ENCODE measurements at regions of chr9 and their contacts with region 1.

Region 1: DNA sequence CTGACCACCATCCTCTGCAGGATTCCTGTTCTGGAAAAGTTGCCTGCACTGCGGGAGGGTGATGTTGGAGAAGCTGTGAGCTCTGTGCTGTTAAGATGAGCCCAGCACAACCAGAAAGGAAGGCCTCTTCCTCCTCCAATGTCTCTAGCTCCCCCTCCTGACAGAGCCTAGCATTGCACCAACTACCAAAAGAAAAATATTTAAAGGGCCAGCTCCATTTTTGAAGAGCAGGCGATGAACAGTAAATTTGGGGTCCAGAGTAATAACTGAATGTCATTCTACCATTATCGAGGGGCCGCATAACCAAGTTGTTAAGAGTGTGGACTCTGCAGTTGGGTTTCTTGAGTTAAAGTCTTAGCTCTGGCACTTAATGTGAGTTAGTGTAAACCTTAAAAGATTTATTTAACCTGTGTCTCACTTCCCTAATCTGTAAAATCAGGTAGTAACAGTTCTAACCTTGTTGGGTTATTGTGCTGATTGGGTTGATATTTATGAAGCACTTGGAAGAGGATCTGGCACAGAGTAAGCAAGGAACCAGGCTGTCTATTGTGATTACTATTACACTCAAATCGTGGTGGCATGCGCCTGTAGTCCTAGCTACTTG is 3.9 kb downstream of the TEX53 start:
- DNase-seq: peak; percentile 76
- H3K4me3 ChIP-seq: no peak overlapping the region
- H3K27ac ChIP-seq: no peak overlapping the region
- H3K4me1 ChIP-seq: no peaks in the 10 kb centered on the region
- H3K27me3 ChIP-seq: peaks cover 0 to 1% of the 10 kb centered on the region in 2 experiments
- CTCF ChIP-seq: peak; percentile 89 to 93
- POLR2A ChIP-seq: no peak

Region 2: DNA sequence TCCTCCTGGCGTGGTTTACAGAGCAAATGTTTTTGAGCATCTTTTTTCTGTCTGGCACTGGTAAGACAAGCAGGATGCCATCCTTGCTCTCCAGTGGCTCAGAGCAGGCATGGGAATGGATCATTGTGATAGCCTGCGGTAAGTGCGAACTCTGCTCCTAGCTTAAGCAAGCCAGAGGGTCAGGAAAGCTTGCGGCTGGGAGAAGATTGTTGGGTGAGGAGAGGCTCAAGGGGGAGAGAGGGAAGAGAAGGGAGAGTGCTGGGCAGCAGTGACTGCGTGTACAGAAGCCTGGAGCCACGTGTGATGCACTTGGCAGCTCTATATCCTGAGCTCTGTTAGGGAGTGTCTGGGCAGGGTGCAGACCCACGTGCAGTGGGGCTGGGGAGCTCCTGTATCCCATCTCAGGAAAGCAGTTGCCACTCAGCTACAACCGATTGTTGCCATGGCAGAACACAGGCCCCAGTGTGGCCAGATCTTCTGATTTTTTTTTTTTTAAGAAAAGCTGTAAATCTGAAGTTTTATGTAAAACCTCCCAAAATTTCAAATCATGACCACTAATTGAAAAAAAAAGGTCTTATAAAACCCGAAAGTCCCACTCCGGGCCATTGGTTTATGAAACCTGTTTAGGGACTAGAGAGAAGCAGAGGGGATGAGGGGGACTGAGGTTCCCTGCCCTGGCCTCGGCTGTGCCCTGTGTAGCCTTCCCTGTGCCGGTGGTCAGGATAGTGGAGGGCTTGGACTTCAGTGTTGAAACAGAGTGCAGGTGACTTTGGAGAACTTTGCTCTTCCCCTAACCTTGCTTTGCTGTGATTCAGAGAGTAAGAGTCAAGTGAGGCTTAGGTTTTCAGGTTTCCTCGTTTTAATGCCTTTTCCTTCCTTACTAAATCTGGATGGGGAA is 710.3 kb before region 1 on chr9:
- CTCF ChIA-PET with region 1: no interaction called
- POLR2A ChIA-PET with region 1: no interaction called
- dilution Hi-C with region 1: no loop called
- intact Hi-C with region 1: no loop called
- DNase-seq: no peak
- H3K4me3 ChIP-seq: no peak overlapping the region
- H3K27ac ChIP-seq: no peak overlapping the region
- H3K4me1 ChIP-seq: no peaks in the 10 kb centered on the region
- H3K27me3 ChIP-seq: no peaks in the 10 kb centered on the region
- CTCF ChIP-seq: no peak
- POLR2A ChIP-seq: no peak

Region 3: GRCh38 chr9:114413861-114414301 is 239.8 kb before region 1 on chr9:
- CTCF ChIA-PET with region 1: interaction called, 397 read pairs
- POLR2A ChIA-PET with region 1: no interaction called
- dilution Hi-C with region 1: no loop called
- intact Hi-C with region 1: no loop called
- DNase-seq: no peak
- H3K4me3 ChIP-seq: no peak overlapping the region
- H3K27ac ChIP-seq: no peak overlapping the region
- H3K4me1 ChIP-seq: no peaks in the 10 kb centered on the region
- H3K27me3 ChIP-seq: peaks cover 0 to 2% of the 10 kb centered on the region in 2 experiments
- CTCF ChIP-seq: no peak
- POLR2A ChIP-seq: no peak

Region 4: DNA sequence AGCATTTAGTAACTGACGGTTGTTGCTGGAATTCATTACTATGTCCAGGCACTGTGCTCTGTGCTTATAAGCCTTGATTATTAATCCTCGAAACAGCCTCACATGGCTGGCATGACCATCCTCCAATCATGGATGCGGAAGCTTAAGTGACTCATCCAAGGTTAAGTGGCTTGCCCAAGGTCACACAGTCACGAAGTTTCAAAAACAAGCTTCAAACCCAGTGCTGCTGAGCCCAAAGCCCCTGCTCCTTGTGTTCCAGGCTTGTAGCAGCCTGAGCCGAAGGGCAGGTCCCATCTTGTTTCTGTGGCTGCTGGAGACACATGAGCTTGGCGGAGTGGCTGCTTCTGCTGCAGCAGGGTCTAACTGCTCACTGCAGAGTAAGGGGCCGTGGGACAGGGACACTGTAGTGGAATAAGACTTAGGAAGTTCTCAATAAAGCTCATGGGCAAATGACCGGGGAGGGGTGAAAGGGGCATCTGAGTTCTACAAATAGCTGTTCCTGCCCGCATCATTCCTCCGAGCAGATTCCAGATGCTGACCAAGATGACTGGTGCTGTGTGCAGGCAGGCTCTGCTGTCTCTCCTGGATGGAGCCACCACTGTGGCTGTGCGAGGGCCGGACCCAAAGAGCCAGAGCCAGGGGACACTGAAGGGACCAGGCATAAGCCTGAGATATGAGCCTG is 180.8 kb before region 1 on chr9:
- CTCF ChIA-PET with region 1: interaction called, 10 read pairs
- POLR2A ChIA-PET with region 1: no interaction called
- dilution Hi-C with region 1: no loop called
- intact Hi-C with region 1: no loop called
- DNase-seq: no peak
- H3K4me3 ChIP-seq: no peak overlapping the region
- H3K27ac ChIP-seq: no peak overlapping the region
- H3K4me1 ChIP-seq: no peaks in the 10 kb centered on the region
- H3K27me3 ChIP-seq: peaks cover 0 to 8% of the 10 kb centered on the region in 2 experiments
- CTCF ChIP-seq: no peak
- POLR2A ChIP-seq: no peak

Region 5: GRCh38 chr9:114518599-114519022 is 135.0 kb before region 1 on chr9:
- CTCF ChIA-PET with region 1: interaction called, 13 read pairs
- POLR2A ChIA-PET with region 1: no interaction called
- dilution Hi-C with region 1: no loop called
- intact Hi-C with region 1: no loop called
- DNase-seq: no peak
- H3K4me3 ChIP-seq: no peak overlapping the region
- H3K27ac ChIP-seq: no peak overlapping the region
- H3K4me1 ChIP-seq: no peaks in the 10 kb centered on the region
- H3K27me3 ChIP-seq: peaks cover 18 to 23% of the 10 kb centered on the region in 2 experiments
- CTCF ChIP-seq: no peak
- POLR2A ChIP-seq: no peak

Region 6: DNA sequence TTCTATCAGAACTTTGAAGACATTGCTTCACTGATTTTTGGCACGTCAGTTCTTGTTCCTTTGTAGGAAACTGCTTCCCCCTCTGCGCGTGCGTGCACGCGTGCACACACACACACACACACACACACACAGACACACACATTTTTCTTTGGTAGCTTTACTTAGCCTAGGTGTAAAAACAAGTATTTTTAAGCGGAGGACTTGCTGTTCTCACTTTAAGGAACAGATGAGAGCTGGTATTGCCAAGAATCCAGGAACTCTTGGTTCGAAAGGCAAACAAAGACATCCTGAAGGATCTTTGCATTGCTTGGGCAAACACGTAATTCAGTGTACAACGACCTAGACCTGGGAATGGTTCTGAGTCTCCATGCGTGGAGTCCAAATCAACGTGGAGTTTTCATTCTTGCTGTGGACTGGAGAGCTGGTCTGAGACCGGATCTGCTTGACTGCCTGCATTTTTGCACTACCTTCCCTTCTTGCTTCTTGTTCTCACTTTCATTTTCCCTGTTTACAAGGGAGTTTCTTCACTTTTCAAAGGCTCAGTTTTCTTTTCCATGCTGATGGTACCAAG is 34.4 kb before region 1 on chr9:
- CTCF ChIA-PET with region 1: interaction called, 13 read pairs
- POLR2A ChIA-PET with region 1: no interaction called
- dilution Hi-C with region 1: no loop called
- intact Hi-C with region 1: no loop called
- DNase-seq: peak; percentile 52
- H3K4me3 ChIP-seq: peak overlapping the region in 1 of 3 experiments; percentile 60
- H3K27ac ChIP-seq: peak overlapping the region; percentile 39
- H3K4me1 ChIP-seq: peaks cover 16% of the 10 kb centered on the region
- H3K27me3 ChIP-seq: no peaks in the 10 kb centered on the region
- CTCF ChIP-seq: no peak
- POLR2A ChIP-seq: no peak

Region 7: GRCh38 chr9:115013998-115014397 is 360.3 kb after region 1 on chr9:
- CTCF ChIA-PET with region 1: interaction called, 21 read pairs
- POLR2A ChIA-PET with region 1: no interaction called
- dilution Hi-C with region 1: no loop called
- intact Hi-C with region 1: no loop called
- DNase-seq: peak; percentile 47
- H3K4me3 ChIP-seq: no peak overlapping the region
- H3K27ac ChIP-seq: no peak overlapping the region
- H3K4me1 ChIP-seq: no peaks in the 10 kb centered on the region
- H3K27me3 ChIP-seq: peaks cover 3 to 5% of the 10 kb centered on the region in 2 experiments
- CTCF ChIP-seq: peak; percentile 62 to 72
- POLR2A ChIP-seq: no peak